CD4-positive, alpha-beta memory T cell (primary cell): ENCODE measurements at regions of chr7 and their contacts with region 1.

Region 1: DNA sequence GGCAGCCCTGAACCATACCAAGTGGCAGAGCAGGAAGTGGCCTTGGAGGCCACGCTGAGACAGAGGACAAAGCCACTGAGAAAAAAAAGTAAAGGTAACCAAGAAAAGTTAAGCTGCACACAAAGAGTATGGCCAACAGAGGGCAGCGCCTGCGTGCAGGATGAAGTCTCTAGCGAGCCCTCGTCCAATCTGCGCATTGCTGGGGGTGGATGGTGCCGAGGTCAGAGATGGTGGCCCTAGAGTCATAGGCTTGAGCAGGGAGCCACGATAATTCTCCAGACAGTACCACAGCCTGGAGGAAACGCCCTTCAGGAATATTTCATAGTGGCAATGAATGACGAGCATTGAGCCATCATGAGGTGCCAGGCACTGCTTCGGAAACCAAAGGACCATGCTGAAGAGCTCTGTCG is 9.7 kb downstream of the ATP6V0E2 start:
- DNase-seq: peak in 4 of 5 donors; percentile 41 to 53 (median 47)
- H3K4me3 ChIP-seq: no peak overlapping the region
- H3K4me3 Mint-ChIP-seq: peak overlapping the region in 1 of 8 donors; percentile 39
- H3K27ac ChIP-seq: no peak overlapping the region
- H3K27ac Mint-ChIP-seq: peak overlapping the region in 2 of 7 donors; percentile 64 to 65
- H3K4me1 ChIP-seq: peaks cover 13% of the 10 kb centered on the region
- H3K4me1 Mint-ChIP-seq: peaks cover 6 to 24% (median 15%) of the 10 kb centered on the region in 4 donors
- H3K27me3 ChIP-seq: no peaks in the 10 kb centered on the region
- H3K27me3 Mint-ChIP-seq: no peaks in the 10 kb centered on the region

Region 2: GRCh38 chr7:149790146-149790548 is 93.3 kb before region 1 on chr7:
- CTCF ChIA-PET with region 1: no interaction called
- POLR2A ChIA-PET with region 1: no interaction called
- intact Hi-C with region 1: no loop called
- DNase-seq: peak in 3 of 5 donors; percentile 16 to 22 (median 20)
- H3K4me3 ChIP-seq: no peak overlapping the region
- H3K4me3 Mint-ChIP-seq: no peak overlapping the region
- H3K27ac ChIP-seq: no peak overlapping the region
- H3K27ac Mint-ChIP-seq: no peak overlapping the region
- H3K4me1 ChIP-seq: no peaks in the 10 kb centered on the region
- H3K4me1 Mint-ChIP-seq: peaks cover 0 to 12% (median 2%) of the 10 kb centered on the region in 4 donors
- H3K27me3 ChIP-seq: no peaks in the 10 kb centered on the region
- H3K27me3 Mint-ChIP-seq: peaks cover 12 to 13% of the 10 kb centered on the region in 2 donors

Region 3: DNA sequence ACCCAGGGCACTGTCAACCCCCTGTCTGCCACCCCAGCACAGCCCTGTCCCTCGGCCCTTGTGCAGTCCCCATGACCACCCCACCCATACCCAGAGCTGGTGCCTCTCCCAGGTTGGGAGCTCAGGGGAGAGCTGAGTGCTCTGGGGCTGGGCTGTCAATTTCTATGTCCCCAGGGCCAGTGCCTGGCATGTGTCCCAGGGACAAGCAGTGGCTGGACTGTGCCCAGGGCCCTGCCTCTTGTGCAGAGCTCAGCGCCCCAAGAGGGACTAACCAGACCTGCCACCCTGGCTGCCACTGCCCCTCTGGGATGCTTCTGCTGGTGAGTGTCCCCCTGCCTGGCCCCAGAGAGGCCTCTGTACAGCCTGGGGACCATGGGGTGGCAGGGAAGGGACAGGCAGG is 74.2 kb before region 1 on chr7:
- CTCF ChIA-PET with region 1: interaction called, 28 read pairs
- POLR2A ChIA-PET with region 1: no interaction called
- intact Hi-C with region 1: no loop called
- DNase-seq: no peak
- H3K4me3 ChIP-seq: no peak overlapping the region
- H3K4me3 Mint-ChIP-seq: no peak overlapping the region
- H3K27ac ChIP-seq: no peak overlapping the region
- H3K27ac Mint-ChIP-seq: no peak overlapping the region
- H3K4me1 ChIP-seq: no peaks in the 10 kb centered on the region
- H3K4me1 Mint-ChIP-seq: no peaks in the 10 kb centered on the region
- H3K27me3 ChIP-seq: no peaks in the 10 kb centered on the region
- H3K27me3 Mint-ChIP-seq: no peaks in the 10 kb centered on the region

Region 4: GRCh38 chr7:149861446-149862045 is 21.9 kb before region 1 on chr7:
- CTCF ChIA-PET with region 1: interaction called, 12 read pairs
- POLR2A ChIA-PET with region 1: interaction called, 80 read pairs
- intact Hi-C with region 1: no loop called
- DNase-seq: no peak
- H3K4me3 ChIP-seq: no peak overlapping the region
- H3K4me3 Mint-ChIP-seq: no peak overlapping the region
- H3K27ac ChIP-seq: no peak overlapping the region
- H3K27ac Mint-ChIP-seq: peak overlapping the region in 1 of 7 donors; percentile 63
- H3K4me1 ChIP-seq: peaks cover 64% of the 10 kb centered on the region
- H3K4me1 Mint-ChIP-seq: peaks cover 32 to 62% (median 48%) of the 10 kb centered on the region in 4 donors
- H3K27me3 ChIP-seq: no peaks in the 10 kb centered on the region
- H3K27me3 Mint-ChIP-seq: no peaks in the 10 kb centered on the region